ENCODE measurements at regions of chr17 and their contacts with region 1.

Region 1: GRCh38 chr17:28384281-28385036 is 13.0 kb downstream of the SARM1 start:
- DNase-seq: peak; percentile 79
- H3K4me3 Mint-ChIP-seq: peak overlapping the region; percentile 88
- H3K27ac Mint-ChIP-seq: peak overlapping the region; percentile 86
- H3K4me1 Mint-ChIP-seq: peaks cover 22% of the 10 kb centered on the region
- H3K27me3 Mint-ChIP-seq: no peaks in the 10 kb centered on the region

Region 2: GRCh38 chr17:28366605-28367004 is 17.9 kb before region 1 on chr17:
- CTCF ChIA-PET with region 1: interaction called, 12 read pairs
- POLR2A ChIA-PET with region 1: interaction called, 4 read pairs
- DNase-seq: no peak
- H3K4me3 Mint-ChIP-seq: no peak overlapping the region
- H3K27ac Mint-ChIP-seq: no peak overlapping the region
- H3K4me1 Mint-ChIP-seq: peaks cover 7% of the 10 kb centered on the region
- H3K27me3 Mint-ChIP-seq: no peaks in the 10 kb centered on the region

Region 3: GRCh38 chr17:28484296-28484695 is 99.8 kb after region 1 on chr17:
- CTCF ChIA-PET with region 1: no interaction called
- POLR2A ChIA-PET with region 1: no interaction called
- DNase-seq: no peak
- H3K4me3 Mint-ChIP-seq: no peak overlapping the region
- H3K27ac Mint-ChIP-seq: no peak overlapping the region
- H3K4me1 Mint-ChIP-seq: peaks cover 9% of the 10 kb centered on the region
- H3K27me3 Mint-ChIP-seq: no peaks in the 10 kb centered on the region

Region 4: DNA sequence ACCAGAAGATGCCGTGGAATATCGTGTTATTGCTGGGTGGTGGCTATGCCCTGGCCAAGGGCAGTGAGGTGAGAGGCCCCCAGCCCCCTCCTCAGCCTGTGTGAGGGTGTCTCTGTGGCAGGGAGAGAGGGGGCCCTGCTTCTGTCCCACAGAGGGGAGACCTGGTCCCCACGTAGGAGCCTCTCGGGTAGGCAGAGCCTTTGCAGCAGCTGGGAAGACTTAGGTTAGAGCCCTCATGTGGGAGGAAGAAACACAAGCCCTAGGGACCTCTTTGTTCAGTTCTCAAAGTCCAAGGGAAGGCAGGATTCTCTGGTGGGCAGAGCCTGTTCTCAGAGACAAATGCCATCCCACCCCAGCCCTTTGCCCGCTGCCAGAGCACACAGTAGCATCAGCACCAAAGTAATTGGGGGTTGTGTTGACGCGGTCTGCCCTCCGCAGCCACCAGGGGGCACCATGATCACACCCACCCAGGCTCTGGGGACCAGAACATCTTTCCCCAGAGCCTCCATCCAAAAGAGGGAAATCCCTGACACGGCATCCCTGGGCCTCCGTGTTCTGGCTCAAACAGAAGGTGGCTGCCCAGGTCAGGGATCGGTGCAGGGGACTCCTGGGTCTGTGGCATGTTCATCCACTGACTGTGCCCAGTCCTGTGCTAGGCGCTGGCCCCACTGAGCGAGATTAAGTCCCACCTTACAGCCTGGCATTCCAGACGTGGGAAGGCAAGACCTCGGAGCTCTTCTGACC is 110.2 kb after region 1 on chr17:
- CTCF ChIA-PET with region 1: no interaction called
- POLR2A ChIA-PET with region 1: no interaction called
- DNase-seq: peak; percentile 79
- H3K4me3 Mint-ChIP-seq: no peak overlapping the region
- H3K27ac Mint-ChIP-seq: no peak overlapping the region
- H3K4me1 Mint-ChIP-seq: no peaks in the 10 kb centered on the region
- H3K27me3 Mint-ChIP-seq: no peaks in the 10 kb centered on the region

Measured in activated CD4-positive, alpha-beta T cell treated with anti-CD3 and anti-CD28 coated beads, Interleukin-2, amount 10 ng/mL, durations not matched to agents 7 days and 5 days (primary cell).